Endothelial cell of umbilical vein (primary cell): ENCODE measurements at regions of chr3 and their contacts with region 1.

Region 1: GRCh38 chr3:134029734-134030378 is at the start of gene SLCO2A1:
- DNase-seq: peak; percentile 23
- H3K4me3 ChIP-seq: peak within 1 kb of the TSS; percentile 8 to 66 (median 49)
- H3K27ac ChIP-seq: no peak within 1 kb of the TSS
- H3K4me1 ChIP-seq: peaks cover 18% of the 10 kb centered on the region
- H3K27me3 ChIP-seq: peaks cover 0 to 5% of the 10 kb centered on the region in 2 experiments
- CTCF ChIP-seq: no peak
- POLR2A ChIP-seq: no peak
- total RNA-seq, gene SLCO2A1: 1.4 and 2.7 TPM in 2 replicates

Region 2: GRCh38 chr3:134008618-134009156 is 21.2 kb before region 1 on chr3:
- CTCF ChIA-PET with region 1: no interaction called
- POLR2A ChIA-PET with region 1: no interaction called
- dilution Hi-C with region 1: no loop called
- intact Hi-C with region 1: loop called (anchors 2 kb)
- DNase-seq: peak; percentile 80
- H3K4me3 ChIP-seq: no peak overlapping the region
- H3K27ac ChIP-seq: peak overlapping the region; percentile 65
- H3K4me1 ChIP-seq: peaks cover 28% of the 10 kb centered on the region
- H3K27me3 ChIP-seq: no peaks in the 10 kb centered on the region
- CTCF ChIP-seq: no peak
- POLR2A ChIP-seq: no peak